Pancreas (tissue), 10 donors: ENCODE measurements at regions of chr5 and their contacts with region 1.

Region 1: DNA sequence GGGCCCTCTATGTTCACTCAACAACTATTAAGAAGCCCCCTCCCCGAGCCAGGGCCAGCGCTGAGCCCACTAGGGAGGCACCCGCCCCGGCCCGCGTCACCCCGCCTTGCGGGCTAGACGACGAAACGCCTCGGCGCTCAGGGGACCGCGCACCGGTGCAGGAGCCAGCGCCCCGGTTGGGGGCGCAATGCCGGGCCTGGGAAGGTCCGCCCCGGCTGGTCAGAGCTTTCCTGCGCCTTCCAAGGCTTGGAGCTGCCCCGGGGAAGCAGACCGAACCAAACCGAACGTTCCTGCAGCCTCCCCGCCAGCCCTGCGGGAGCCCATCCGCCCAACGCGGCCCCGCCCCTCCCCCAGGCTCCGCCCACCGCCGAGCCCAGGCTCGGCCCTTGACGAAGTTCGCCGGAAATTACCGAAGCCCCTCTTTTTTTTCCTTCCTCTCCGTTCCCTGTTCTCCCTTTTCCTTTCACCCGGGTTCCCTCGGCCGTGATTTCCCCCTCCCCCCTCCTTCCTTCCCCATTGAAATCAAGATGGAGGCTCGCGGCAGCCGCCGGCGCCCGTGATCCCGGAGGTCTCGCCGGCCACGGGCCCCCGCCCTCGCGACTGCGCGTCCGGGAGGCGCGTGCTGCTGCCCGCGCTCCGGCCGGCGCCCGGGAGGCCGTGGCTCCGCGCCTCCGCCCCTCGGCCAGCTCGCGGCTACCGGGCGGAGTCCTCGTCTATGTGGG is at the start of gene TRIO:
- DNase-seq: peak; percentile 86 to 96 (median 93)
- ATAC-seq: peak; percentile 82 to 93 (median 86)
- H3K4me3 ChIP-seq: peak within 1 kb of the TSS; percentile 49 to 86 (median 73)
- H3K27ac ChIP-seq: peak within 1 kb of the TSS; percentile 81 to 92 (median 84)
- H3K4me1 ChIP-seq: peaks cover 14 to 22% (median 16%) of the 10 kb centered on the region in 3 donors
- H3K27me3 ChIP-seq: no peaks in the 10 kb centered on the region
- CTCF ChIP-seq: peak in 3 of 4 donors; percentile 13 to 23 (median 21)
- total RNA-seq, gene TRIO: 27.3 to 82.5 (median 34.1) TPM

Region 2: DNA sequence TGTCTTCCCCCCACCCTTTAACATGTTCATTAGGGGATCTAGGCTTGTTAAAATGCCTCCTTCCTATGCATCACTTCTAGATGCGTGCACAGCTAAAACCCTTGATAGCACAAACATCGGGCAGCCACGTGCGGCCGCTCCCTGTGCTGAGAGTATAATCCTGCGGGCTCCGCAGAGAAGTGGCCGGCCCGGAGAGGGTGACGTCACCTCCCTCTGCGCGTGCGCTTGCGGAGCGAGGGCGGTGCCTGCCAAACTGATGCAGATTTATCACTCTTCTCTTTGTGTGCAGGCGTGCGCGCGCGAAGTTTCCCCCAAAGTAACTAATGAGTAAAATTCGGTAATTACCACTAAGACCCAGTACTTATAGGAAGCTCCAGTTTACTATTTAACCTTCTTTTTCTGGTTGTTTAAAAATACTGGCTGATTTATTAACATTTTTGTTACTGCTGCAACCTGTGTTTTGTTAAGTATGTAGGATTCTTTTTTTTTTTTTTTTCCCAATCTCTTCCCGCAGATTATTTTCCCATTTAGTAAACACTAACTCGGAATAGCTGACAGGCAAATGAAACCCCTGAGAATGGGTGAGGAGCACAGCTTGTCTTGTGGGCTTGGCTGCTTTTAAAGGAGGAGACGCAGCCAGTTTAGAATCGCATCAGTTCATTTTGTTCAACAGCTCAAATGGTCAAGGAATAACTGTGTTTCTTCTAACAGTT is 121.8 kb after region 1 on chr5:
- intact Hi-C with region 1: loop called in 2 of 3 experiments (anchors 10 kb)
- DNase-seq: peak; percentile 81 to 94 (median 90)
- ATAC-seq: peak; percentile 97 to 99 (median 98)
- H3K4me3 ChIP-seq: peak overlapping the region in 1 of 4 donors; percentile 23
- H3K27ac ChIP-seq: peak overlapping the region in 1 of 4 donors; percentile 5
- H3K4me1 ChIP-seq: peaks cover 9 to 24% (median 10%) of the 10 kb centered on the region in 3 donors
- H3K27me3 ChIP-seq: no peaks in the 10 kb centered on the region
- CTCF ChIP-seq: no peak

Region 3: DNA sequence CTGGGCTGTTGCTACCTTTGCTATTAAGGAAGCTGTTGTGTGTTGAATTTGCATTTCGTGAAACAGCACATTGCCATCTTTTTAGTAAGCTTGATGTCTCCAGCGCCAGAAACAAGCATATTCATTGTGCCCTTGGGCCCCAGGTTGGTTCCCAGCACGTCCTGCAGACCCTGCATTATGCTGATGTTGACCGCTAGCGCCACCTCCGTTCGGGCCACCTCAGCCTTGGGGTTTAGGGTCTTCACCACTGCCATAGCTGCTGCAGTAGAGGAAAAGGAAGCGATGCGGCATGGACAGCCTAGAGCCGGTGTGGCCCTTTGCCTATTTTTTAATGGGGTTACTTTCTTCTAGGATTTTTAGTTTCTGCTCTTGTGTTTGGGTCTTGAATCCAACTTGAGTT is 497.8 kb after region 1 on chr5:
- intact Hi-C with region 1: no loop called
- DNase-seq: no peak
- ATAC-seq: no peak
- H3K4me3 ChIP-seq: no peak overlapping the region
- H3K27ac ChIP-seq: no peak overlapping the region
- H3K4me1 ChIP-seq: no peaks in the 10 kb centered on the region
- H3K27me3 ChIP-seq: no peaks in the 10 kb centered on the region
- CTCF ChIP-seq: no peak